ENCODE measurements at regions of chr1 and their contacts with region 1.

Region 1: DNA sequence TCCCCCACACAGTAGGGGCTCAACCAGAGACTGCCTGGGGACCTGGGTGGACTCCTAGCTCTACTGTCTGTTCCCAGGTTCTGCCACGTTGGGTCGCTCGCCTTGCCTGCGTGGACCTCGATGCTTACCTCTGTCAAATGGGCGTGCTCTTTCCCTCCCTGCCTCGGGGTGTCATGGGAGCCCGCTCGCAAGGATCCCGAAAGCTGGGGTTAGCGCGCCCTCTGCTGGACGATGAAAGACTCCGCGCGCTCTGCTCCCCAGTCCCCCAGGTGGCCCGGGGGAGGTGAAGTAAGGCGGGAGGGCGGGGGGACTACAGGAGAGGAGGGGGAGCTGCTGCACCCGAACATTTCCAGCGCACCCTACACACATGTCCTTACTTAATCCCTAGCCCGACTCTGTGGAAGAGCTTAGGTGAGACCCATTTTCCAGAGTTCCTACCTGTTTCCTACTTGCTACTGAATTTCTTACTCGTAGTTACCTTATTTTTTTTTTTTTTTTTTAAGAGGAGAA is 2.3 kb upstream of the BSND start:
- DNase-seq: peak; percentile 67 to 87
- ATAC-seq: peak; percentile 80 to 95; a peak in 5 of 6 replicates
- H3K4me3 ChIP-seq: no peak overlapping the region
- H3K27ac ChIP-seq: 0 out of 6 replicates have a peak overlapping the region, but pooled peaks of 1 of the 2 experiments have one; percentile 50
- H3K4me1 ChIP-seq: 0 out of 3 replicates have a peak, but pooled peaks cover 4% of the 10 kb centered on the region
- CTCF ChIP-seq: peak; percentile 69
- EP300 ChIP-seq: no peak
- POLR2A ChIP-seq: no peak
- RAD21 ChIP-seq: peak; percentile 87 to 92

Region 2: GRCh38 chr1:54199151-54199764 is 797.2 kb before region 1 on chr1:
- CTCF ChIA-PET with region 1: no interaction called
- POLR2A ChIA-PET with region 1: no interaction called
- DNase-seq: peak in 1 of 2 experiments; percentile 16
- ATAC-seq: peak; percentile 4 to 11; a peak in 3 of 6 replicates
- H3K4me3 ChIP-seq: peak overlapping the region; percentile 81
- H3K27ac ChIP-seq: peak overlapping the region; percentile 77 to 97
- H3K4me1 ChIP-seq: peaks cover 15% of the 10 kb centered on the region
- CTCF ChIP-seq: no peak
- EP300 ChIP-seq: no peak
- POLR2A ChIP-seq: no peak
- RAD21 ChIP-seq: no peak

Region 3: DNA sequence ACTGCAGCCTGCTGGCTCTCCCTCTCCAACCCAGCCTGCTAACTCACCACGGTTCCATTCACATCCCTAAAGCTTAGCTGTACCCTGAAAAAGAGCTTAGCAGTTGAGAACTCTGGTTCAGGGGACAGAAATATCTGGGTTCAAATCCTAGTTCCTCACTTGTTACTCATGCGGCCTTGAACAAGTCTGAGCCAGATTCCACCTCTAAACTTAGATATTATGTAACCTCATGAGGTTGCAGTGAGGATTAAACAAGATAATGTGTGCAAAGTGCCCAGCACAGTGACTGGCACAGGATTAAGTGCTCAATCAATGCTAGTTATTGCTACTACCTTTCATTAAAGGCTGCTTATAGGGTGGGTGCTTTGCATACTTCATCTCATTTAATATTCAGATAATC is 68.1 kb before region 1 on chr1:
- CTCF ChIA-PET with region 1: interaction called, 14 read pairs
- POLR2A ChIA-PET with region 1: no interaction called
- DNase-seq: no peak
- ATAC-seq: no peak
- H3K4me3 ChIP-seq: no peak overlapping the region
- H3K27ac ChIP-seq: no peak overlapping the region
- H3K4me1 ChIP-seq: no peaks in the 10 kb centered on the region
- CTCF ChIP-seq: no peak
- EP300 ChIP-seq: no peak
- POLR2A ChIP-seq: no peak
- RAD21 ChIP-seq: no peak

Region 4: DNA sequence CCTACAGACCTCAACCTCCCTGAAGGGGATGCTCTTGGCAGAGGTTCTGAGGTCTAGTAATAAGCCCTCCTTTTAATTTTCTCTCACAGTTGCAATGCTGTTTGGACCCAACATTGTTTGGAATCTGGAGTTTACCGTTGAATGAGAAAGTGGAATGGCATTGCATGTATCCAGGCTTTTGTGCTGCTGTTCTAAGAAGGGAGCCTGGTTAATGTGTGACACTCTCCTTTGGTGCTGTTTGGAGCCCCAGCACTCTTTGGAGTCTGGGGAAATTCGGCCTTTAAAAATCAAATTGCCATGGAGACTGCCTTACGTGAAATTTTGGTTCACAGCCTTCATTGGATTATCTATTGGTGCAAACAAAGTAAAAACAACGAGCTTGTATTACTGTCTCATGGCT is 39.7 kb before region 1 on chr1:
- CTCF ChIA-PET with region 1: interaction called, 451 read pairs
- POLR2A ChIA-PET with region 1: no interaction called
- DNase-seq: no peak
- ATAC-seq: no peak
- H3K4me3 ChIP-seq: no peak overlapping the region
- H3K27ac ChIP-seq: no peak overlapping the region
- H3K4me1 ChIP-seq: peaks cover 9% of the 10 kb centered on the region; the same call in 1 of the 3 replicates
- CTCF ChIP-seq: no peak
- EP300 ChIP-seq: no peak
- POLR2A ChIP-seq: no peak
- RAD21 ChIP-seq: no peak

Region 5: GRCh38 chr1:54973205-54973921 is 23.1 kb before region 1 on chr1:
- CTCF ChIA-PET with region 1: interaction called, 19 read pairs
- POLR2A ChIA-PET with region 1: no interaction called
- DNase-seq: peak; percentile 24 to 44
- ATAC-seq: peak; percentile 83 to 89; a peak in 5 of 6 replicates
- H3K4me3 ChIP-seq: no peak overlapping the region
- H3K27ac ChIP-seq: no peak overlapping the region
- H3K4me1 ChIP-seq: peaks cover 22% of the 10 kb centered on the region
- CTCF ChIP-seq: peak; percentile 37
- EP300 ChIP-seq: no peak
- POLR2A ChIP-seq: no peak
- RAD21 ChIP-seq: peak; percentile 19 to 27; a peak in 1 of 5 replicates

Region 6: GRCh38 chr1:55007625-55008024 is 11.2 kb after region 1 on chr1:
- CTCF ChIA-PET with region 1: interaction called, 15 read pairs
- POLR2A ChIA-PET with region 1: no interaction called
- DNase-seq: no peak
- ATAC-seq: no peak
- H3K4me3 ChIP-seq: no peak overlapping the region
- H3K27ac ChIP-seq: no peak overlapping the region
- H3K4me1 ChIP-seq: no peaks in the 10 kb centered on the region
- CTCF ChIP-seq: no peak
- EP300 ChIP-seq: no peak
- POLR2A ChIP-seq: no peak
- RAD21 ChIP-seq: no peak

Region 7: DNA sequence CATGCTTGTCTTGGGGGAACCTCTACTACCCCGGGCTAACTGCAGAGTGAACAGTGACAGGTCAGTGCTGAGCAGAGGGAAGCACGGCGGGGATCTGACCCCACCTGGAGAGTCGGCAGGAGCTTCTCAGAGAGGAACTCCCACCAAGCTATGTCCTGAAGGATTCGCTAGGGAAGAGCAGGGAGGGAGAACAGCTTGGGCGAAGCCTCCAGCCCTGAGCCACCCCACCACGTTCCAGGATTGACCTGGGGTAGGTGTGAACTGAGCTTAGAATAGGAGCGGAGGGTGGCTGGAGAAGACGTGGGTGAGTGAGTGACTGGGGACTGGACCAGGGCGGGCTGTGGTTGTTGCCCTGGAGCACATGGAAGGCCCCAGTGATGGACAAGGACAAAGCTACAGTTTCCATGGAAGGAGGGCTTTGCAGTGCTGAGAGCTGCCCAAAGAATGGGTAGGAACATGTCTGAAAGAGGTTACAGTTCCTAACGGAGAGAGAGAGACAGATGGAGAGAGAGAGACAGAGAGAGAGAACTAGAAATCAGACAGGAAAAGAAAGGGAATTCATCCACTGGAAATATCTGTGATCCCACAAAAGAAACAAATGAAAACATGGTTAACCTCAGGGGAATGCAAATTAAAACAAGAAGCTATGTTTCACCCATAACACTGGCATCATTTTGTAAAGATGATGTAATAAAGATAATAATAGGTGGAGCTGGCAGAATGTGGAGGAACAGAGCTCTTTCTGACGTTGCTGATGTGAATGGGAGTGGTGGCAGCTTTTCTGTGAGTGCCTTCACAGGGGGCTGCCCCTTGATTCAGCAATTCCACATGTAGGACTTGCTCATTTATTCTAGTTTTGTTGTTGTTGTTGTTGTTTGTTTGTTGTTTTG is 19.6 kb after region 1 on chr1:
- CTCF ChIA-PET with region 1: interaction called, 17 read pairs
- POLR2A ChIA-PET with region 1: no interaction called
- DNase-seq: no peak
- ATAC-seq: 0 out of 6 replicates have a peak, but pooled peaks of 1 of the 2 experiments have one; percentile 23
- H3K4me3 ChIP-seq: no peak overlapping the region
- H3K27ac ChIP-seq: no peak overlapping the region
- H3K4me1 ChIP-seq: no peaks in the 10 kb centered on the region
- CTCF ChIP-seq: no peak
- EP300 ChIP-seq: no peak
- POLR2A ChIP-seq: no peak
- RAD21 ChIP-seq: no peak

Region 8: DNA sequence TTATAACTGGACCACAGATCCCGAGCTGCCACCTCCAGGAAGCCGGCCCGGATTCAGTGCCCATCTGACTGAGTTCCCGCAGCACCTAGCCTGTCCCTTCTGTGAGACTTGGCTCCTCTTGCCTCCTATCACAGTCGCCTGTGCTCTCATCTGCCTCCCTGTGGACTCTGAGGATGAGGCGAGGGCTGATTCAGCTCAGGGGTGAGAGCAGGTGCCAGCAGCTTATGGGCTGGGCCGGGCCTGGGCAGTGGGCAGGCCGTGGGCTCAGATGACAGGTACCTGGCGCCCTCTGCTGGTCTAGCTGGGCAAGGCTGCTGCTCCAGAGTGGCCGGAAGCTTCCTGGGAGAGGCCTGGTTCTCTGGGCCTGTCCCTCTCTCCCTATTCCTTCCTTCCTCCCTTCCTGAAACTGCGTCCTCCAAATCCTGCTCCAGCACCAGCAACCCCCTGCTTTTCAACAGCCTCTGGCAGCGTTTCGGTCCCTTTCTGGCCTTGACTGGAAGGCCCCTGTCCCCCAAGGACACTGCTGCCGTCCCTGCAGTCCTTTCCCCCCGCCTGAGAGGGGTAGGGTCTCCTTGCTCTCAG is 25.6 kb after region 1 on chr1:
- CTCF ChIA-PET with region 1: interaction called, 17 read pairs
- POLR2A ChIA-PET with region 1: no interaction called
- DNase-seq: peak; percentile 83 to 87
- ATAC-seq: peak; percentile 99 to 100
- H3K4me3 ChIP-seq: no peak overlapping the region
- H3K27ac ChIP-seq: peak overlapping the region; percentile 50 to 81; a peak in 4 of 6 replicates
- H3K4me1 ChIP-seq: no peaks in the 10 kb centered on the region
- CTCF ChIP-seq: peak; percentile 79
- EP300 ChIP-seq: no peak
- POLR2A ChIP-seq: no peak
- RAD21 ChIP-seq: peak; percentile 77

Region 9: DNA sequence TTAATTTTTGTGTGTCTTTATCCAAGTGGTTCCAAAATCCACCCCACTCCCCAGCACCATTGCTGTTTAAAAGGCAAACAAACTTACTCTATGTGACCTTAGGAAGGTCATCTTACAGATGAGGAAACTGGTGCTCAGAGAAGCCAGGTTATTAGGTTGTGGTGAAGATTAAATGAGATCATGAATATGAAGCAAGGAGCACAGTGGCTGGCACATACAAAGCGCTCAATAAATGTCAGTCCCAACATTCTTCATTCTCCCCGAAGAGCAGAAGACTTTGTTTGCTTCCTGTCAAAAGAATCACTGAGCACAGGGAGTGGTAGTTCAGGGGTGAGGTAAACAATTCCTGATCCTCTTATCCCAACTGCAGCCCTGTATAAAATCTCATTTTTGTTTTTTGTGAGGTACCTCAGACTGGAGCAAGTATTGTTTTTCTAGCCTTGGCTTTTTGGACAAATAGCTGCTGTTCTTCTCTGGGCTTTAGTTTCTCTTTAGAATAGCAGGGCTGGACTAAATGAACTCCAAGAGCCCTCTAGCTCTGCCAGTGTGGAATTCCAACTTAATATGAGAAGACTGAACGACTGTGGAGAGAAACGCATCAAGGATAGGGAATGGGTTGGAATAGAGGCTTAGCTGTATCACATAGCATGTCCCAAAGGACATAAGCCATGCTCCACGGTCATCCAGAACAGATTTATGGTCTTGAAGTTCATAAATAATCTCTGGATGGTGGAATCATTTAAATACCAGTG is 674.1 kb after region 1 on chr1:
- CTCF ChIA-PET with region 1: no interaction called
- POLR2A ChIA-PET with region 1: no interaction called
- DNase-seq: no peak
- ATAC-seq: no peak
- H3K4me3 ChIP-seq: no peak overlapping the region
- H3K27ac ChIP-seq: peak overlapping the region in 1 of 2 experiments; percentile 24; a peak in 1 of 6 replicates
- H3K4me1 ChIP-seq: 0 out of 3 replicates have a peak, but pooled peaks cover 5% of the 10 kb centered on the region
- CTCF ChIP-seq: no peak
- EP300 ChIP-seq: no peak
- POLR2A ChIP-seq: no peak
- RAD21 ChIP-seq: no peak